Endothelial cell of umbilical vein (primary cell): ENCODE measurements at regions of chr1 and their contacts with region 1.

Region 1: GRCh38 chr1:247373721-247374141 is 42.1 kb upstream of the ZNF496 start:
- DNase-seq: peak; percentile 21
- H3K4me3 ChIP-seq: peak overlapping the region in 1 of 3 experiments; percentile 8
- H3K27ac ChIP-seq: no peak overlapping the region
- H3K4me1 ChIP-seq: no peaks in the 10 kb centered on the region
- H3K27me3 ChIP-seq: peaks cover 0 to 3% of the 10 kb centered on the region in 2 experiments
- CTCF ChIP-seq: peak; percentile 50 to 63
- POLR2A ChIP-seq: no peak

Region 2: DNA sequence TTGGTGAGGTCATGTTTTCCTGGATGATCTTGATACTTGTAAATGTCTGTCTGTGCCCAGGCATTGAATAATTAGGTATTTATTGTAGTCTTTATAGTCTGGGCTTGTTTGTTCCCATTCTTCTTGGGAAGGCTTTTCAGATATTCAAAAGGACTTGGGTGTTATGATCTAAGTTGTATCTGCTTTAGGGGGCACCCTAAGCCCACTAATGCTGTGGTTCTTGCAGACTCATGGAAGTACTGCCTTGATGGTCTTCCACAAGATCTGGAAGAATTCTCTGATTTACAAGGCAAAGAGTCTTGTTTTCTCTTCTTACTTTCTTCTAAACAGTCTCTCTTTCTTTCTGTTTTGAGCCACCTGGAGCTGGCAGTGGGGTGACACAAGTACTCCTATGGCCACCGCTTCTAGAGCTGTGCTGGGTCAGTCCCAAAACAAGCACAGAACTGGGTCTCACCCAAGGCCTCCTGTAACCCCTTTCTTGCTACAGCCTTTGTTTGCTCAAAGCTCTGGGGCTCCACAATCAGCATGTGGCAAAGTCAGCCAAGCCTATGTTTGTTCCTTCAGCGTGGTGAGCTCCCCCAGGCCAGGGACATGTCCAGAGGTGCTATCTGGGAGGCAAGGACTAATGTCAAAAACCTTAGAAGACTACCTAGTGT is 105.2 kb before region 1 on chr1:
- CTCF ChIA-PET with region 1: no interaction called
- POLR2A ChIA-PET with region 1: no interaction called
- dilution Hi-C with region 1: no loop called
- intact Hi-C with region 1: no loop called
- DNase-seq: no peak
- H3K4me3 ChIP-seq: no peak overlapping the region
- H3K27ac ChIP-seq: no peak overlapping the region
- H3K4me1 ChIP-seq: no peaks in the 10 kb centered on the region
- H3K27me3 ChIP-seq: no peaks in the 10 kb centered on the region
- CTCF ChIP-seq: no peak
- POLR2A ChIP-seq: no peak

Region 3: GRCh38 chr1:247362153-247362552 is 11.6 kb before region 1 on chr1:
- CTCF ChIA-PET with region 1: interaction called, 12 read pairs
- POLR2A ChIA-PET with region 1: no interaction called
- dilution Hi-C with region 1: no loop called
- intact Hi-C with region 1: no loop called
- DNase-seq: no peak
- H3K4me3 ChIP-seq: no peak overlapping the region
- H3K27ac ChIP-seq: no peak overlapping the region
- H3K4me1 ChIP-seq: no peaks in the 10 kb centered on the region
- H3K27me3 ChIP-seq: peaks cover 0 to 3% of the 10 kb centered on the region in 2 experiments
- CTCF ChIP-seq: no peak
- POLR2A ChIP-seq: no peak

Region 4: GRCh38 chr1:247390116-247390791 is 16.5 kb after region 1 on chr1:
- CTCF ChIA-PET with region 1: interaction called, 24 read pairs
- POLR2A ChIA-PET with region 1: no interaction called
- dilution Hi-C with region 1: no loop called
- intact Hi-C with region 1: no loop called
- DNase-seq: peak; percentile 71
- H3K4me3 ChIP-seq: no peak overlapping the region
- H3K27ac ChIP-seq: no peak overlapping the region
- H3K4me1 ChIP-seq: no peaks in the 10 kb centered on the region
- H3K27me3 ChIP-seq: no peaks in the 10 kb centered on the region
- CTCF ChIP-seq: peak; percentile 73 to 84
- POLR2A ChIP-seq: no peak

Region 5: GRCh38 chr1:247487057-247487456 is 113.3 kb after region 1 on chr1:
- CTCF ChIA-PET with region 1: no interaction called
- POLR2A ChIA-PET with region 1: no interaction called
- dilution Hi-C with region 1: no loop called
- intact Hi-C with region 1: loop called (anchors 1 kb)
- DNase-seq: peak; percentile 10
- H3K4me3 ChIP-seq: no peak overlapping the region
- H3K27ac ChIP-seq: no peak overlapping the region
- H3K4me1 ChIP-seq: no peaks in the 10 kb centered on the region
- H3K27me3 ChIP-seq: no peaks in the 10 kb centered on the region
- CTCF ChIP-seq: peak in 1 of 2 donors; percentile 15
- POLR2A ChIP-seq: no peak